B cell (primary cell): ENCODE measurements at regions of chr3 and their contacts with region 1.

Region 1: DNA sequence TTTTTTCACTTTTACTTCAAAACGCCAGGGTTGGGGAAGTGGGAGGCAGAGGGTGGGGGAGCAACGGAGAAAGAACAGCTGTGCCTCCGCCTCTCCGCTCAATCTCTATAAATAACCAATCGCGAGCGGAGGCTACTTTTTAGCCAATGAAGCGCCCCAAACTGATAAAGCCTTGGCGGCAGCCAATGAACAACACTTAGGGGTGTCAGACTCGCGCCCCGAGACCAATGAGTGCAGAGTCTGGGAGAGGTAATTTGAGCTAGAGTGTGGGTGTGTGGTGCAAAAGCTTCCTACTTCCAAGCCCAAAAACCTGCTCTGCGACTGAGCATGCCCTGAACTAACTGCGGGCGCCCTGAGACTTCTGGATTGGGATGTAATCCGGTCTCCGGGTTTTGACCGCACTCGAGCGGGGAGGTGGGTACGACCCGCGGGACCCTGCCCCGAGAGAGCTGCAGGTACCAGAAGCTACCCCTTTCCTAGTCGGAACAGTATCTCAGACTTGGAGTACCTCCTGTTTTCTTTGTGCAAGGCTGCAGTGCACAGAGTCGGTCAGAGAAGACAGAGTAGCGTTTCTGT is 800 bp upstream of the RAP2B start:
- DNase-seq: peak; percentile 95
- ATAC-seq: peak; percentile 75
- H3K4me3 ChIP-seq: peak overlapping the region; percentile 61 to 99 (median 93)
- H3K4me3 Mint-ChIP-seq: peak overlapping the region; percentile 99
- H3K27ac ChIP-seq: peak overlapping the region; percentile 79 to 83
- H3K27ac Mint-ChIP-seq: peak overlapping the region; percentile 98
- H3K4me1 ChIP-seq: peaks cover 26 to 38% of the 10 kb centered on the region in 2 donors
- H3K4me1 Mint-ChIP-seq: peaks cover 47% of the 10 kb centered on the region
- H3K27me3 ChIP-seq: no peaks in the 10 kb centered on the region
- H3K27me3 Mint-ChIP-seq: no peaks in the 10 kb centered on the region
- CTCF ChIP-seq: no peak

Region 2: DNA sequence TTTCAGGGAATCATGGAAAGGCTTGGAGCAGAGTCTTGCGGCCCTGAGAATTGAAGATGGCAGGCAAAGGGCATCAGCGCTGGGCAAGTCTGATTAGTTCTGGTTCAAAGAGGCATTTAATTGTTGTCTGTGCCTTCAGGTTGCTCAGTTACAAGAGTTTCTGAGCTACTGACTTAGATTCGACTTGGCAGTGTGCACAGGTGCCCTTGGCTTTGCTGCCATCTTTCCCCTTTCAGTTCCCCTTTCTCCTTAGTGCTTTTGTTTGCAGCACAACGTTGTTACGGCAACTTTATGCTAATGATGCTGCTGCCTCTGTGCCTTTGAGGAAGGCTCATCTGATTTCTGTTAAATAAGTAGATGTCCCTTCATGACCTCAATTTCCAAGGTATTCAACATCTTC is 1895.4 kb before region 1 on chr3:
- CTCF ChIA-PET with region 1: no interaction called
- POLR2A ChIA-PET with region 1: no interaction called
- intact Hi-C with region 1: loop called (anchors 5 kb)
- DNase-seq: peak; percentile 95
- ATAC-seq: peak; percentile 89
- H3K4me3 ChIP-seq: peak overlapping the region in 1 of 5 experiments; percentile 34
- H3K4me3 Mint-ChIP-seq: peak overlapping the region; percentile 66
- H3K27ac ChIP-seq: peak overlapping the region; percentile 97 to 99
- H3K27ac Mint-ChIP-seq: peak overlapping the region; percentile 99
- H3K4me1 ChIP-seq: peaks cover 44 to 53% of the 10 kb centered on the region in 2 donors
- H3K4me1 Mint-ChIP-seq: peaks cover 66% of the 10 kb centered on the region
- H3K27me3 ChIP-seq: no peaks in the 10 kb centered on the region
- H3K27me3 Mint-ChIP-seq: no peaks in the 10 kb centered on the region
- CTCF ChIP-seq: no peak

Region 3: DNA sequence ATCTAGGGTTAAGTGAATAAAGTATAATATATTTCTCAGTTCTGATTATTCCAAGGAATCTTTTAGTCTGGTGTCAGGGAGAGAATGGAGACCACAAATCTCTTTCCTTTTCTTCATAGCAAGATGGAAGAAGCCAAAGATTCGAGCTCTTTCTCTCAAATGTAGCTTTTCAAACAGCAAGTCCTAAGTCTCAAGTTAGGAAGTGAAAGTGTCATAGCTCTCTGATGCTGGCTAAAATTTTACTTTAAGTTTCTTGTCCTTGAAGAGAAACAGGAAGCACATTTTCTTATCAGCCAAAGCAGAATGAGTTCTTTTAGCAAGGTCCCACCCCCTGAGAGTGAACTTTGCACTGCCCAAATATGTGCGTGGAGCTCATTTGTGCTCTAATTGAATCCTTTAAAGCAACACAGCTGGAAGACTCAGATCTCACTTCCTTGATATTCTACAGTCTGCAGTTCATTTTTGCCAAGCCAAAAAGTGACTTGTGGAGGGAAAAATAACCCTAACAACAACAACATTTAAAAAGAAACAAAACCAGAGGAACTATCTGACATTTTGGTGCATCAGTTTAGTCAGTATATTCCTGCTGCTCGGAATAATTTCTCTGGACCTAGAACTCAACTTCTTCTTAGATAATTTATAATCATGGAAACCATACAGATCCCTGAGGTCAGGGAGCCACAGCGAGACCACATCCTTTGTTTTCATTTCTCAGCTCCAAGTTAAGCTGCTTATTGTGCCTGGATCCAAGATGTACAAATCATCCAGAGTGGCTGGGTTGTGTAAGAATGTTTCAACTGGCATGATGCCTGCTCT is 565.0 kb before region 1 on chr3:
- CTCF ChIA-PET with region 1: no interaction called
- POLR2A ChIA-PET with region 1: no interaction called
- intact Hi-C with region 1: no loop called
- DNase-seq: peak; percentile 79
- ATAC-seq: peak; percentile 96
- H3K4me3 ChIP-seq: peak overlapping the region in 3 of 5 experiments; percentile 5 to 52 (median 25)
- H3K4me3 Mint-ChIP-seq: peak overlapping the region; percentile 73
- H3K27ac ChIP-seq: peak overlapping the region; percentile 67 to 79
- H3K27ac Mint-ChIP-seq: peak overlapping the region; percentile 99
- H3K4me1 ChIP-seq: peaks cover 15 to 23% of the 10 kb centered on the region in 2 donors
- H3K4me1 Mint-ChIP-seq: peaks cover 28% of the 10 kb centered on the region
- H3K27me3 ChIP-seq: no peaks in the 10 kb centered on the region
- H3K27me3 Mint-ChIP-seq: no peaks in the 10 kb centered on the region
- CTCF ChIP-seq: no peak

Region 4: DNA sequence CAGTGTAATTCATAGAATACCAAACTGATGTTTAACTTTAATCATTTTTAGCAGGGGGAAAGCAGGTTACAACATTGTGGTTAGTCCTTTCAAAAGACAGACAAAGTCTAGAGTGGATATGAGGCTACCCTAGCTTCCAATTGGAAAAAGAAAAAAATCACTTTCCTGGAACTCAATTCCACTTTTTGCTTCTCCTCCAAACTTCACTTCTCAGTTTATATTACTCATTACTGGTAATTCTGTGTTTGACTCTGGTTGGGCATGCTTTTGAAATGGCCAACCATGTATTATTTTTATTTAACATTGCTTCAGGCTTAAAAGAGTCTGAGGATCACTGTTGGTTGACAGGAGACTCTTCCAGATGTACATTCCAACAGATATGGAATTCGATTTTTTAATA is 85.6 kb after region 1 on chr3:
- CTCF ChIA-PET with region 1: no interaction called
- POLR2A ChIA-PET with region 1: no interaction called
- intact Hi-C with region 1: no loop called
- DNase-seq: no peak
- ATAC-seq: no peak
- H3K4me3 ChIP-seq: no peak overlapping the region
- H3K4me3 Mint-ChIP-seq: no peak overlapping the region
- H3K27ac ChIP-seq: no peak overlapping the region
- H3K27ac Mint-ChIP-seq: no peak overlapping the region
- H3K4me1 ChIP-seq: peaks cover 3 to 7% of the 10 kb centered on the region in 2 donors
- H3K4me1 Mint-ChIP-seq: peaks cover 14% of the 10 kb centered on the region
- H3K27me3 ChIP-seq: no peaks in the 10 kb centered on the region
- H3K27me3 Mint-ChIP-seq: peaks cover 11% of the 10 kb centered on the region
- CTCF ChIP-seq: no peak

Region 5: DNA sequence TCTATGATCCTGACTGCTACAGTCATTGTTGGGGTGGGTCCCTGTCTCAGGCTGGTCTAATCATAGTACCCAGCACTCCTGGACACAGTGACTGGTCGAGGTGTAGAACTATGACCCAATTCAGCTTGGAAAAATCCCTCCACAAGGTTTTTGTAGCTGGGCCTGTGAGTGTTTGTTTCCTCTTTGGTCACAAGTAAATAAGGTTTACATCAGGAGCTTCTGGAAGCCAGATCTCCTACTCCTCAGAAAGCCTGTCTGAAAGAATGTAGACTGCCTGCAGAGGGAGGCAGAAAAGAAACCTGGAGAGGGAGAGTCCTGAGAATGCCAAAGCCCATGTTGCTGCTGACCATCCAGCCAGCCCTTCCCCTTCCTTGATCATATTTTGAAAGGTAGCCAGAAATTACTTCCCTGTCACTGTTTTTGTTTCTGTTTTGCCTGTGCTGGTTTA is 124.0 kb after region 1 on chr3:
- CTCF ChIA-PET with region 1: interaction called, 4 read pairs
- POLR2A ChIA-PET with region 1: no interaction called
- intact Hi-C with region 1: loop called (anchors 5 kb)
- DNase-seq: no peak
- ATAC-seq: no peak
- H3K4me3 ChIP-seq: no peak overlapping the region
- H3K4me3 Mint-ChIP-seq: no peak overlapping the region
- H3K27ac ChIP-seq: no peak overlapping the region
- H3K27ac Mint-ChIP-seq: no peak overlapping the region
- H3K4me1 ChIP-seq: peaks cover 0 to 4% of the 10 kb centered on the region in 2 donors
- H3K4me1 Mint-ChIP-seq: peaks cover 5% of the 10 kb centered on the region
- H3K27me3 ChIP-seq: no peaks in the 10 kb centered on the region
- H3K27me3 Mint-ChIP-seq: no peaks in the 10 kb centered on the region
- CTCF ChIP-seq: no peak

Region 6: DNA sequence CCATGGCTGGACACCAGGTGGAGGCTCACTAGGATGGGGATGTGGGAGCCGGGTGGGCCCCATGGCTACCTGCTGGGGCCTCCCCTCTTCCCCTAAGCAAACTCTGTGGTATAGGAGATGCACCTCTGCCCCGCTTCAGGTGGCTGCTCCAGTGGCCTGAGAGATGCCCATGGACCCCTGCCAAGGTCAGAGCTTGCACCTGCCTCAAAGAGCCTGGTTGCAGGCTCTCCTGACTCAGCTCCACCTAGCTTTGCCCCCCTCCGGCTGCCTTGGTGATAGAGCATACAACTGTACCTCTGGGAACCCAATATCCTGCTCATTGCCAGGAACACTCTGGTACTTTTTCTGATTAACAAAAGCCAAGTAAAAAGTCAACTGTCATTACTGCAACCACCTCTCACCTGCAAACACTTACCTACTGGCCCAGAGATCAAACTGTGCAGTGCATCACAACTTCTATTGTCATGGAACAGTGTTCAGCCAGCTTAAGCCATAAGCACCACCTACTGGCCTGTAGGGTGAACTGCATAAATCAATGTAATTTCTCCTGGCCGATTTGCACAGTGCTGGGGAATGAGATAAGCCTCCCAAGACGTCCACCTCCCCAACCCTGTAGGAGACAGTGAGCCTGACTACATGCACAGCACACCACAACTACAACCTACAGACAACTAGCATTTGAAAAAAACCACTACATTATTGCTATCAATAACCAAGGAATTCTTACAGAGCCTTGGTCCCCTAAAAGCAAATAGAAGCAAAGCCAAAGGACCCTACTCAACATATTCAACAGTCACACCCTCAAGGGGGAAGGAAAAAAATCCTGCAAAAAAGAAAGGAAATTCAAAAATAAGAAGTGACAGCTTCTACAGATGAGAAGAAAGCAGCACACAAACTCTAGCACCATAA is 607.6 kb after region 1 on chr3:
- CTCF ChIA-PET with region 1: interaction called, 3 read pairs
- POLR2A ChIA-PET with region 1: no interaction called
- intact Hi-C with region 1: loop called (anchors 5 kb)
- DNase-seq: peak; percentile 61
- ATAC-seq: peak; percentile 77
- H3K4me3 ChIP-seq: no peak overlapping the region
- H3K4me3 Mint-ChIP-seq: no peak overlapping the region
- H3K27ac ChIP-seq: no peak overlapping the region
- H3K27ac Mint-ChIP-seq: no peak overlapping the region
- H3K4me1 ChIP-seq: no peaks in the 10 kb centered on the region
- H3K4me1 Mint-ChIP-seq: no peaks in the 10 kb centered on the region
- H3K27me3 ChIP-seq: no peaks in the 10 kb centered on the region
- H3K27me3 Mint-ChIP-seq: peaks cover 3% of the 10 kb centered on the region
- CTCF ChIP-seq: peak; percentile 86

Region 7: GRCh38 chr3:154323891-154324738 is 1162.9 kb after region 1 on chr3 and contains the start of gene DHX36:
- CTCF ChIA-PET with region 1: no interaction called
- POLR2A ChIA-PET with region 1: no interaction called
- intact Hi-C with region 1: loop called (anchors 1 kb)
- DNase-seq: peak; percentile 94
- ATAC-seq: peak; percentile 90
- H3K4me3 ChIP-seq: peak within 1 kb of the TSS; percentile 80 to 92 (median 88)
- H3K4me3 Mint-ChIP-seq: peak within 1 kb of the TSS; percentile 98
- H3K27ac ChIP-seq: peak within 1 kb of the TSS; percentile 94 to 98
- H3K27ac Mint-ChIP-seq: peak within 1 kb of the TSS; percentile 98
- H3K4me1 ChIP-seq: peaks cover 42 to 44% of the 10 kb centered on the region in 2 donors
- H3K4me1 Mint-ChIP-seq: peaks cover 38% of the 10 kb centered on the region
- H3K27me3 ChIP-seq: no peaks in the 10 kb centered on the region
- H3K27me3 Mint-ChIP-seq: peaks cover 3% of the 10 kb centered on the region
- CTCF ChIP-seq: no peak
- total RNA-seq, gene DHX36: 113 and 132 TPM in 2 replicates